ENCODE measurements at regions of chr10 and their contacts with region 1.

Region 1: GRCh38 chr10:20065814-20066213 is 249.6 kb downstream of the PLXDC2 start:
- DNase-seq: no peak
- H3K4me3 ChIP-seq: no peak overlapping the region
- H3K27ac ChIP-seq: no peak overlapping the region
- H3K4me1 ChIP-seq: no peaks in the 10 kb centered on the region
- H3K27me3 ChIP-seq: no peaks in the 10 kb centered on the region
- CTCF ChIP-seq: no peak
- POLR2A ChIP-seq: no peak

Region 2: GRCh38 chr10:19998482-19998881 is 67.3 kb before region 1 on chr10:
- CTCF ChIA-PET with region 1: no interaction called
- POLR2A ChIA-PET with region 1: no interaction called
- dilution Hi-C with region 1: no loop called
- intact Hi-C with region 1: loop called (anchors 2 kb)
- DNase-seq: no peak
- H3K4me3 ChIP-seq: no peak overlapping the region
- H3K27ac ChIP-seq: no peak overlapping the region
- H3K4me1 ChIP-seq: no peaks in the 10 kb centered on the region
- H3K27me3 ChIP-seq: no peaks in the 10 kb centered on the region
- CTCF ChIP-seq: no peak
- POLR2A ChIP-seq: no peak